ENCODE measurements at regions of chr9 and their contacts with region 1.

Region 1: GRCh38 chr9:71911253-71912074 is at the start of gene C9orf85:
- DNase-seq: peak; percentile 97
- H3K4me3 ChIP-seq: peak within 1 kb of the TSS; percentile 89
- CTCF ChIP-seq: no peak

Region 2: DNA sequence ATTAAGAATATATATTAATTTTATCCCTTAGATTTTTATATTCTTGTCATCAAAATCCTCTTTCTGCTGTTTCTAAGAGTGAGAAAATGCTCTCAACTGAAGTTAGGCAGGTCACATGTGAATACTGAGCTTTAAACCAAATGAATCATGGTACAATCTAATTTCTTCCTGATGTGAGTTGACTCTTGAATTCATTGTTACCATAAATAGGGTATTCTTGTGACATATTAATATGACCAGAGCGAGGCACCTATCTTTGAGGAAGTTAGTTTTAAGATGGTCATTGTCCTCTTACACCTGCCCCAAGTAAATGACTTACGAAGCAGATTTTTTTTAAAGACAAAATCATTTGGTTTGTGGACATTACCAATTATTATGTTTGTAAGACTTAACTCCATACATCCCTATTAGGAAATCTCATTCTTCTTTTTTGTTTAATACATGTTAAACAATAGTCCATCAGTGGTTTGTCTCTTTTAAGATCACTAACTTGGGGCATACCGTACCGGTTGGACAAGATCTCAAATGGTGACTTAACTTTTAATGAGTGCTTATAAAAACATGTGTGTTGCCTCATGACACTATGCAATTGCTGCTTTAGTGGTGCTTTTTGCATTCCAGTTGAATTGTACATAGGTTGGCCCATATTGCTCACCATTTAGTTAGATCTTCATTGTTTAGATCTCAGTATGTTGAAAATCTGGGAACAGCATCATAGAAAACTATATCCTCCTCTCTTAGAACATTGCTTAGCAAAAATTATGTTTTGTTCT is 17.6 kb after region 1 on chr9:
- CTCF ChIA-PET with region 1: interaction called, 4 read pairs
- POLR2A ChIA-PET with region 1: interaction called, 15 read pairs
- DNase-seq: peak; percentile 70
- H3K4me3 ChIP-seq: no peak overlapping the region
- CTCF ChIP-seq: no peak

Region 3: DNA sequence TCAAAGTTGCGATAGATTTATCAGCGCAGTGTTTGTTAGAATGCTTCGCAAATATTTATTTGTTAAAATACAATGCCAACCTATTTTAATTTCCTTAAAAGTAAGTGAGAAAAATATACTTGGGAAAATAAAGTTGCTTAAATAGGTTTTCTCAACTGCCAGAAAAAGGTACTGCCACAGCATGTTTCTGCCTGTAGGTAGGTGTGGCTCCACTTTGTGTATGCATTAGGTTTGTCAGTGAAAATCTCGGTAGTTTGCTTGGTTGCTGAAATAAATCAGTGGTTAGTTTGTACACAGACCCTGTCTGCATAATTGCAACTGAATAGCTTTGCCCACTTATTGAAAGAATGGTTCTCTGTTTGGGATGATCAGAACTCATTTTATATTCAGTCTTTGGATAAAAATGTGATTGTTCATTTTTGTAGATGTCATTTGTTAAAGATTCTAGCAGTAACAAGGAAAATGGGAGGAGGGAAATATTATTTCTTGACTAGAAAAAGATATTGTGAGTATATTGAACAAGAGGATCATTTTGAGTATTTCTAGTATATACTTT is 25.7 kb after region 1 on chr9:
- CTCF ChIA-PET with region 1: interaction called, 3 read pairs
- POLR2A ChIA-PET with region 1: interaction called, 15 read pairs
- DNase-seq: no peak
- H3K4me3 ChIP-seq: no peak overlapping the region
- CTCF ChIP-seq: no peak

Region 4: DNA sequence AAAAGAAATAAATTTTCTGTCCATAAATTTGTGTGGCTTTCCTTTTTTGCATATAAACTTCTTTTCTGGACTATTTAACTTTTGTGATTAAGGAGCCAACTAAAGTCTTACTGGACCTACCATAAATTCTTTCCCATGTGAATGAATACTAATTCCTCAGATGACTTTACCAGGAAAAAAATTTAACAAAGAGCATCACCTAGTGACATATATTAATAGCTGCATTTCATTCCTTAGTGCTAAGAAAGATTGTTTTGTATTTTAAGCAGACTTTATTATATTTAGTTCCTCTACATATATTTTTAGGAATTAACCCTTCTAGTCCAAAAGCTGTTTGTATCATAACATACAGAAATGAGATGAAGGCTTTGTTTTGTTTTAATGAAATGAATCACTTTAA is 64.4 kb after region 1 on chr9:
- CTCF ChIA-PET with region 1: no interaction called
- POLR2A ChIA-PET with region 1: no interaction called
- DNase-seq: no peak
- H3K4me3 ChIP-seq: no peak overlapping the region
- CTCF ChIP-seq: peak; percentile 12

Measured in AG04449 (cell line).